ENCODE measurements at regions of chr1 and their contacts with region 1.

Region 1: GRCh38 chr1:212477014-212477679 is 44.4 kb downstream of the NENF start:
- DNase-seq: peak; percentile 99
- ATAC-seq: peak; percentile 96
- H3K4me3 ChIP-seq: no peak overlapping the region
- H3K27ac ChIP-seq: 0 out of 2 replicates have a peak overlapping the region, but pooled peaks have one; percentile 3
- H3K4me1 ChIP-seq: peaks cover 19% of the 10 kb centered on the region
- H3K27me3 ChIP-seq: no peaks in the 10 kb centered on the region
- CTCF ChIP-seq: peak; percentile 99

Region 2: DNA sequence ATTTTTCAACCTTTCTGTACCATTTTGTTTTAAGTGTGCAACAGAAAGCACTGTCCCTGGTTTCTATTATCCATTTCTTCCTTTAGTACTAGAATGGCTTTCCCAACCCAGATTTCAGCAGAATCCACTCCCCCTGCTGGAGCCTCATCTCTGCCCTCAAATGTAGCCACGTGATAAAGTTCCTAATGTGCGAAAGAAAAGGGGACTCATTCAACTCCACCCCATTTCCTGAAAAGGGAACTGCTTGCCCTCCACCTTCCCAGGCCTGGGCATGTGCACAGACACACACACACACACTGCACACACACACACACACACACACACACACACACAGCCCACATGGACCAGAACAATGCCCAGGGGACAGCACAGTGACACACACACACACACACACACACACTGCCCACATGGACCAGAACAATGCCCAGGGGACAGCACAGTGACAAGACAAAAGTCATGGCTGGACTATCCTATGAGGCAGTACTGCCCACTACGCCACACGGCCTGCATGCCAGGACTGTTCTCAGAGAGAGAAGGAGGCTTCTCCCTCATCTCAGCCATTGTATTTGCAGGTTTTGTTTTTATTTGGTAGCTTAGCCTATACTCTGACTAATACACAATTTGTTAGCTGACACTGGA is 95.6 kb before region 1 on chr1:
- CTCF ChIA-PET with region 1: no interaction called
- POLR2A ChIA-PET with region 1: no interaction called
- intact Hi-C with region 1: no loop called
- DNase-seq: no peak
- ATAC-seq: no peak
- H3K4me3 ChIP-seq: no peak overlapping the region
- H3K27ac ChIP-seq: no peak overlapping the region
- H3K4me1 ChIP-seq: no peaks in the 10 kb centered on the region
- H3K27me3 ChIP-seq: no peaks in the 10 kb centered on the region
- CTCF ChIP-seq: no peak

Region 3: DNA sequence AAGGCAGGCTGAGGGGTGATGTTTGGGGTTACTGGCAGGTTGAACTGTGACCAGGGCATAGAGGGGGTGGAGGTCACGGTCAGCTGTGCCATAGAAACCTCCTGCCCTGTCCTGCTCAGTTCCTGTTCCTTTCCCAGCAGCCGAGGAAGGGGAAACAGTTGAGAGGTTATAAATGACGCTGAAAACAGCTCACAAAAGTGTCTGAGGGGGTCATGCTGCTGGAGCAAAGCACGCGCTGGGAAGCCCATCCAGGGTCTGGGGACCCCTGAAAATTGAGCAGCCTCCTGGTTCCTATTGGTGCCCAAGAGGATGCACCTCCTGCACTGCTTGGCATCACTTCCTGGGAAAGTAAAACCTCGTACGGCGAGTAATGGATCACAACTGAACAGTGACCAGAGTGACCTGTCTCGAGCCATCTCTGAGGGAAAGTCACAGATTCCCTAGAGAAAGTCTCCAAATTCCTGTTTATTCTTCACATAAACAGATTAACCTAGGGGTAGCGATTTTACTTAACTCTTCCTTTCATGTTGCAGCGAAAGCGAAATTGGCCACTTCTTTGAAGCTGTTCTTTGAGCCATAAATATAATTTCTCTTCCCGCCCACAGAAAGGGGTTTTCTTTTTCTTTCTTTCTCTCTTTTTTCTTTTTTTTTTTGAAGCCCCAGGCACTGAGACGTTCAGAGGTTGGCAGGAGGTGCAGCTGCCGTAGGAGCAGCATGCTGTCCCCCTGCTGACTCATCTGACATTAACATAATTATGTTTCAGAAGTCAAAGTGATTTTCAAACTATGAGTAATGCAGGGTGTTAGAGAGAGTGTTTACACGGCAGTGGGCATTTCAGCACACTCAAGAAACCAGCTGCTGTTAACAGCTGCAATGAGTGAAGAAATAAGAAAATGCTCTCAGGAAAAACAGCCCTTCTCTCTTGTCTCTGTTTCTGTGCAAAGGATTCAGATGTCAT is 89.7 kb after region 1 on chr1:
- CTCF ChIA-PET with region 1: interaction called, 6 read pairs
- POLR2A ChIA-PET with region 1: no interaction called
- intact Hi-C with region 1: loop called (anchors 2 kb)
- DNase-seq: peak; percentile 81
- ATAC-seq: peak; percentile 91
- H3K4me3 ChIP-seq: peak overlapping the region; percentile 67
- H3K27ac ChIP-seq: peak overlapping the region; percentile 30
- H3K4me1 ChIP-seq: peaks cover 21% of the 10 kb centered on the region
- H3K27me3 ChIP-seq: no peaks in the 10 kb centered on the region
- CTCF ChIP-seq: no peak

Region 4: DNA sequence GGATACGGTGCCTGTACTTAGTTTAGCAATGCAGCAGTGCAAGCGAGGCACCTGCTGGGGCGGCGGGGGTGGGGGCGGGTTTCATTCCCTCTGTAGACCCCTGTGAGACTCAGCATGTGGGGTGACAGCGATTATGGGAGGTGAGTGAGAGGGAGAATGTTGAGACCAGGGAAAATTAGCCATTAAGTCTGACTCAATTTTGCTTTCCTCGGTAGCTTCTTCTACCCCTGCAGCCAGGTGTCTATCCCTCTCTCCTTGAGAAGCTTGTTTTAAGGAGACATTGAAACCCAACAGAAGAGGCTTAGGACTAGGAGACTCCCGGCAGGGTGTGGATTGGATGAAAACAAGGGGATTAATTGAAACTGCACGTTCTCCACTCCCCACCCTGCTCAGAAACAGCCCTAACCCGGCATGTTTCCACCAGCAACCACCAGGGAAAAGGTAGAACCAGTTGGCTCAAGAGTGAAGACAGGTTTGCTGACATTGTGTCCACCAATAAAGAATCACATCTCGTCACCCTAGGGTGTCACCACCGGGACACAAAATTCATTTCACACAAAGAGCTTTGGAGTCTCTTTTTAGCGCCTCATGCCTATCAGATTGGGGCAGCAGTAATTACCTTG is 110.9 kb after region 1 on chr1:
- CTCF ChIA-PET with region 1: no interaction called
- POLR2A ChIA-PET with region 1: no interaction called
- intact Hi-C with region 1: no loop called
- DNase-seq: no peak
- ATAC-seq: no peak
- H3K4me3 ChIP-seq: no peak overlapping the region
- H3K27ac ChIP-seq: no peak overlapping the region
- H3K4me1 ChIP-seq: no peaks in the 10 kb centered on the region
- H3K27me3 ChIP-seq: no peaks in the 10 kb centered on the region
- CTCF ChIP-seq: no peak

Region 5: GRCh38 chr1:212630158-212630900 is 153.2 kb after region 1 on chr1:
- CTCF ChIA-PET with region 1: interaction called, 3 read pairs
- POLR2A ChIA-PET with region 1: no interaction called
- intact Hi-C with region 1: loop called (anchors 1 kb)
- DNase-seq: peak; percentile 77
- ATAC-seq: peak; percentile 89
- H3K4me3 ChIP-seq: no peak overlapping the region
- H3K27ac ChIP-seq: no peak overlapping the region
- H3K4me1 ChIP-seq: no peaks in the 10 kb centered on the region
- H3K27me3 ChIP-seq: no peaks in the 10 kb centered on the region
- CTCF ChIP-seq: peak; percentile 95

Region 6: GRCh38 chr1:212700892-212701819 is 224.0 kb after region 1 on chr1:
- CTCF ChIA-PET with region 1: interaction called, 4 read pairs
- POLR2A ChIA-PET with region 1: no interaction called
- intact Hi-C with region 1: loop called (anchors 5 kb)
- DNase-seq: peak; percentile 54
- ATAC-seq: peak; percentile 72
- H3K4me3 ChIP-seq: peak overlapping the region; percentile 61
- H3K27ac ChIP-seq: no peak overlapping the region
- H3K4me1 ChIP-seq: peaks cover 18% of the 10 kb centered on the region
- H3K27me3 ChIP-seq: peaks cover 70% of the 10 kb centered on the region
- CTCF ChIP-seq: peak; percentile 40

Region 7: GRCh38 chr1:212782422-212783154 is 305.4 kb after region 1 on chr1:
- CTCF ChIA-PET with region 1: no interaction called
- POLR2A ChIA-PET with region 1: no interaction called
- intact Hi-C with region 1: loop called (anchors 5 kb)
- DNase-seq: peak; percentile 57
- ATAC-seq: peak; percentile 64
- H3K4me3 ChIP-seq: no peak overlapping the region
- H3K27ac ChIP-seq: no peak overlapping the region
- H3K4me1 ChIP-seq: no peaks in the 10 kb centered on the region
- H3K27me3 ChIP-seq: no peaks in the 10 kb centered on the region
- CTCF ChIP-seq: peak; percentile 91

Measured in PC-3 (cell line).